ENCODE measurements at regions of chr2 and their contacts with region 1.

Region 1: DNA sequence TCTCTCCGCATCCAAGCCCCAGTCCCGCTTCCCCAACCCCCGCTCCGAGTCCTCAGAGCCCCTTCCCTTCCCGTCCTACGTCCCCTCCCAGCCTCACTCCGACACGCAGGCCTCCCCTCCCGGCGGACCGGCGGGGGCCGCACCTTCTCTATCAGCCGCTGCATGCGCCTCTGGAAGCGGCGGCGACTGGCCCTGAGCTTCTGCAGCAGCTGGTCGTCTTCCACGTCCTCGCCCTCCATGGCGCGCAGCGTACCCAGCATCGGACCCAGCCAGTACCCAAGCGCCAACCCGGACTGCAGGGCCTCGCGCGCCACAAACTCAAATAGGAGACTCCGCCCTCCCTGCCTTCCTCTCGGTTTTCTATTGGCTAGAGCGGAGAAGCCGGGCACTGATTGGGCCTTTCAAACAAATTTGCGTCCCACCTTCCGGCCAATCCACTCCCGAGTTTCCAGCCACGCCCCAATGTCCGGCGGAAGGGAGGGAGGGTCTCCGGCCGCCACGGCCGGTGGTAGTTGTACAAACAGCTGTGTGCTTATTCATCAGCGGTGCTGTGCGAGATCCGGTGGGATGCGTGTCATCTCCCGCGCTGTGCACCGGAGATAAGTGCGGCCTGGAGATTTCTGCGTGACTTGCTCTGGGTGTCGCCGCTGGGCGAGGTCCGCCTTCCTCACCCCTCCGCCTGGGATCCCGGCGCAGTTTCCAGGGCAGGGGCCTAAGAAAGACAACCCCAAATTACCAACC is at the start of gene HJURP:
- DNase-seq: peak; percentile 92 to 94 (median 93)
- ATAC-seq: peak; percentile 98 to 100 (median 100)
- H3K4me3 ChIP-seq: peak within 1 kb of the TSS; percentile 51 to 87 (median 64)
- H3K27ac ChIP-seq: peak within 1 kb of the TSS in 8 of 12 donors; percentile 30 to 72 (median 65)
- H3K4me1 ChIP-seq: peaks cover 0 to 26% (median 7%) of the 10 kb centered on the region in 12 donors
- H3K27me3 ChIP-seq: peaks cover 0 to 4% (median 0%) of the 10 kb centered on the region in 9 donors
- CTCF ChIP-seq: no peak
- POLR2A ChIP-seq: peak in 1 of 2 donors; percentile 44
- total RNA-seq, gene HJURP: 0.10 to 8.4 (median 0.48) TPM in 6 of 9 donors, not detected in the others

Region 2: DNA sequence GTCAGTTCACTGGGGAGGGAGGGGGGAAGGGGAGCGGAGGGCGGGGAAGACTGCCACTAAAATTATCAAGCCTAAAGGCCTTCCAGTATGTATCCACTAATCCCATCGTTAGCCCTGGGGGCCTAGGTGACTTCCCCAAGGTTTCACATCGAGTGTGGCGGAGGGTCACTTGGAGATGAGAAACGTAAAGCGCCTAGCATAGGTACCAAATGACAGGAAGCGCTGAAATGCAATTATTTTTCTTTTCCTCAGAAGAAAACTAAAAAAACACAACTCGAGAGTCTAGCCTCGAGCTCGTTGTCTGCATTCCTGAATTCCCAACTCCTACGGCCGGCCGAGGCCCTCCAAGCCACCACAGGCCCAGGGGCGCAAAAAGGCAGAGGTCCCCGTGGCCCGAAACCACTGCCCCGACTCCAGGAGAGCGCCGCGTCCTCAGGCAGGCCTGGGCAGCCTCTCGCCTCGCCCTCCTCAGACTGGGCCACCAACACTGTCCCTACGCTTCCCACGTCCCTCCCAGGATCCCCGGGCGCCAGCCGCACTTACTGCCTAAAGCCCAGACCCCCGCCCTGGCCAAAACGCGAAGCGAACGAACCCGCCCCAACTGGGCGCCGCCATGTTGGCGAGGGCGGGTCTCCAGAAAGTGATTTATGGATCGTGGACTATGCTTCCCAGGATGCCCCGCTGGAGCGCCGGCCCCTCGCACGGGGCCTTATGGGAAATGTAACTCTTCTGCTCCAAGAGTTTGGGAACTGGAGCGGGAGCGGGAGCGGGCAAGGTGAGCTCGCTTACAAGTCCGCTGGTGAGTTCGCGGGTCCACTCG is 288.1 kb before region 1 on chr2 and contains the start of gene USP40:
- intact Hi-C with region 1: loop called in 1 of 10 experiments (anchors 10 kb)
- DNase-seq: peak; percentile 86 to 92 (median 91)
- ATAC-seq: peak; percentile 96 to 100 (median 99)
- H3K4me3 ChIP-seq: peak within 1 kb of the TSS; percentile 70 to 100 (median 86)
- H3K27ac ChIP-seq: peak within 1 kb of the TSS; percentile 72 to 99 (median 92)
- H3K4me1 ChIP-seq: peaks cover 0 to 26% (median 15%) of the 10 kb centered on the region in 12 donors
- H3K27me3 ChIP-seq: no peaks in the 10 kb centered on the region
- CTCF ChIP-seq: peak in 1 of 12 donors; percentile 20
- POLR2A ChIP-seq: peak in 1 of 2 donors; percentile 56
- total RNA-seq, gene USP40: 13.7 to 21.8 (median 20.2) TPM

Region 3: GRCh38 chr2:234025466-234026185 is 171.2 kb after region 1 on chr2:
- intact Hi-C with region 1: no loop called
- DNase-seq: no peak
- ATAC-seq: no peak
- H3K4me3 ChIP-seq: no peak overlapping the region
- H3K27ac ChIP-seq: peak overlapping the region in 1 of 12 donors; percentile 10
- H3K4me1 ChIP-seq: no peaks in the 10 kb centered on the region
- H3K27me3 ChIP-seq: peaks cover 0 to 22% (median 3%) of the 10 kb centered on the region in 9 donors
- CTCF ChIP-seq: no peak
- POLR2A ChIP-seq: no peak

Measured in heart left ventricle (tissue), 16 donors.